HepG2 (cell line): ENCODE measurements at regions of chr10 and their contacts with region 1.

Region 1: DNA sequence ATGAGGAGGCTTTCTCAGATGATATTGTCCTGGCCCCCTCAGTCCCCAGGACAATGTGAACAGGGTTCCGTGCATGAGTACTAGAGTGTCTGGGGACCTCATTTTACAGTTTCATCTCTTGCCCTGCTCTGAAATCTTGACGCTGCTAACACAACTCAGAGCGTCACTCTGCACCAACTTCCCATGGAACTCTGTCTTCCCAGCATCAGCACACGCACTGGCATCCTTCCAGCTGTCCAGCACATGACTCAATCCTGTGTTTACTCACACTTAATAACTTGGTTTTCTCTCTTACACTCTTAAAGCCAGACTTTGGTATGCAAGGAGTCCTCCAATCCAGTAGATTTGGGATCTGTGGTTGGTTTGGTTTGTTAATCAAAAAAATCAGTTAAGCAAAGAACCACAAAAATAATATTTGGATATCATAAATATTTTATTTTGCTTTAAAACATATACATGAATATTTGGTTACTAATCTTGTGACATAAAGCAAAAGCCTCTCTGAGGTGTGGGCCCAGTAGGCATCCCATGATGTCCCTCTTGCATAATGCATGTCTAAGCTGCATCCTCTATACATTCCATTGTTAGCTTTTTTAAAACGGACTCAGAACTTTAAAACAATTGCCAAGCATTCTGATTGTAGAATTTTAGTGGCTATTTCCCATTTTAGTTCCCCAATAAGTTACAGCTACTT is 131.0 kb downstream of the CXCL12 start:
- DNase-seq: peak; percentile 49
- ATAC-seq: no peak
- H3K4me3 ChIP-seq: no peak overlapping the region
- H3K27ac ChIP-seq: peak overlapping the region; percentile 3
- H3K4me1 ChIP-seq: peaks cover 68% of the 10 kb centered on the region
- H3K27me3 ChIP-seq: no peaks in the 10 kb centered on the region
- CTCF ChIP-seq: no peak
- EP300 ChIP-seq: peak in 1 of 2 experiments; percentile 17; a peak in 1 of 4 replicates
- POLR2A ChIP-seq: no peak
- RAD21 ChIP-seq: no peak

Region 2: GRCh38 chr10:43846187-43846680 is 407.7 kb before region 1 on chr10:
- CTCF ChIA-PET with region 1: no interaction called
- POLR2A ChIA-PET with region 1: no interaction called
- in situ Hi-C with region 1: no loop called
- intact Hi-C with region 1: no loop called
- DNase-seq: no peak
- ATAC-seq: no peak
- H3K4me3 ChIP-seq: no peak overlapping the region
- H3K27ac ChIP-seq: no peak overlapping the region
- H3K4me1 ChIP-seq: no peaks in the 10 kb centered on the region
- H3K27me3 ChIP-seq: peaks cover 0 to 10% of the 10 kb centered on the region in 2 experiments; a peak in 2 of 5 replicates
- CTCF ChIP-seq: no peak
- EP300 ChIP-seq: no peak
- POLR2A ChIP-seq: no peak
- RAD21 ChIP-seq: no peak

Region 3: DNA sequence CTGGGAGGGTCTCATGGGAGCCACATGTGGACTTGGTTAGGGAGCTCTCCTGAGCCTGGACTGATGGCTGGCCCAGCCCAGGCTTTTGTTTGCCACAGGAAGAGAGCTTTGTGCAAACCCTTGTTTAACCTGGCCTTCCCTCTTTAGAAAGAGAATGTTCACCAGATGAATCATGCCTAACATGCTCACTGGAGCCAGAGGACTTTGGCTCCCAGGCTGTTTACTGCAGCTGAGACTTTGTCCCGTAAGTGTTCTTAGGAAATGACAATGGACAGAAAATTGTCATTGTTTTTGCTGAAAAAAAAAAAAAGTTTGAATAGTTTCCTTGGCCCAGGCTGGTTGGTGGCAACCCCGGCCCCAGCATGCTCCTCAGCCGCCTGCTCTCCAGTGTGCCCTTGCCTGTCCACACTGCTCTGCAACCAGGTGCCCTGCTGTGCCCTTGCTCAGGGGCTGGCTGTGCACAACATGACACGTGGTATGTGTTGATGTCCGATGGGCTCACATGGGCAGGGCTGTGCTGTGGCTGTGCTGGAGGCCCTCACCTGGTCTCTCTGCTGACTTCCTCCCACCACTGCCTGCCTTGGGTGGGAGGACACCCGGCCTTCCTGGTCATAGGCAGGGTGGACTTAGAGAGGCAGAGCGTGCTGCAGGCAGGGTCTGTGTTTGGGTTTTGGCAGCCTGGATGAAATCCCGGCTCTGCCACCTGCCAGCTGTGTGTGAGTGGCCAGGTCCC is 389.9 kb before region 1 on chr10:
- CTCF ChIA-PET with region 1: no interaction called
- POLR2A ChIA-PET with region 1: no interaction called
- in situ Hi-C with region 1: no loop called
- intact Hi-C with region 1: loop called (anchors 10 kb)
- DNase-seq: peak; percentile 96
- ATAC-seq: peak; percentile 94
- H3K4me3 ChIP-seq: peak overlapping the region in 1 of 3 experiments; percentile 2; a peak in 1 of 6 replicates
- H3K27ac ChIP-seq: peak overlapping the region; percentile 70
- H3K4me1 ChIP-seq: peaks cover 72% of the 10 kb centered on the region
- H3K27me3 ChIP-seq: no peaks in the 10 kb centered on the region; a peak in 1 of 5 replicates
- CTCF ChIP-seq: peak; percentile 9; the same call in 1 of the 2 replicates
- EP300 ChIP-seq: peak in 1 of 2 experiments; percentile 90; a peak in 2 of 4 replicates
- POLR2A ChIP-seq: no peak
- RAD21 ChIP-seq: no peak

Region 4: DNA sequence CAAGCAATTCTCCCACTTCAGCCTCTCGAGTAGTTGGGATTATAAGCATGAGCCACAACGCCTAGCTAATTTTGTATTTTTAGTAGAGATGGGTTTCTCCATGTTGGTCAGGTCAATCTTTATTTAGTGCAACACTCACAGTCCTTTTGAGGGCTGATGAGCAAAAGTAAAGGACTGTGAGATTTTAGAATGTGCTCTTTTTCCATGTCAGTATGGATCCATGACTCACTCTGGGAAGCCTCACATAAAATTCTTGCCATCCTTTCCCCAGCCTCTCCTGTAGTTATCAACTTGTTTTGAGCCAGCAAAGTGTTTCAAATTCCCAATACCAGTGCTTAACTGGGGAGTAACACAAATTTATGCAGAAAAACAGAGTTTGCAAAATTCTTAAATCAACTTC is 266.7 kb after region 1 on chr10:
- CTCF ChIA-PET with region 1: no interaction called
- POLR2A ChIA-PET with region 1: no interaction called
- in situ Hi-C with region 1: no loop called
- intact Hi-C with region 1: no loop called
- DNase-seq: no peak
- ATAC-seq: no peak
- H3K4me3 ChIP-seq: no peak overlapping the region
- H3K27ac ChIP-seq: no peak overlapping the region
- H3K4me1 ChIP-seq: no peaks in the 10 kb centered on the region
- H3K27me3 ChIP-seq: no peaks in the 10 kb centered on the region
- CTCF ChIP-seq: no peak
- EP300 ChIP-seq: no peak
- POLR2A ChIP-seq: no peak
- RAD21 ChIP-seq: no peak